AG04450 (cell line): ENCODE measurements at regions of chr14 and their contacts with region 1.

Region 1: DNA sequence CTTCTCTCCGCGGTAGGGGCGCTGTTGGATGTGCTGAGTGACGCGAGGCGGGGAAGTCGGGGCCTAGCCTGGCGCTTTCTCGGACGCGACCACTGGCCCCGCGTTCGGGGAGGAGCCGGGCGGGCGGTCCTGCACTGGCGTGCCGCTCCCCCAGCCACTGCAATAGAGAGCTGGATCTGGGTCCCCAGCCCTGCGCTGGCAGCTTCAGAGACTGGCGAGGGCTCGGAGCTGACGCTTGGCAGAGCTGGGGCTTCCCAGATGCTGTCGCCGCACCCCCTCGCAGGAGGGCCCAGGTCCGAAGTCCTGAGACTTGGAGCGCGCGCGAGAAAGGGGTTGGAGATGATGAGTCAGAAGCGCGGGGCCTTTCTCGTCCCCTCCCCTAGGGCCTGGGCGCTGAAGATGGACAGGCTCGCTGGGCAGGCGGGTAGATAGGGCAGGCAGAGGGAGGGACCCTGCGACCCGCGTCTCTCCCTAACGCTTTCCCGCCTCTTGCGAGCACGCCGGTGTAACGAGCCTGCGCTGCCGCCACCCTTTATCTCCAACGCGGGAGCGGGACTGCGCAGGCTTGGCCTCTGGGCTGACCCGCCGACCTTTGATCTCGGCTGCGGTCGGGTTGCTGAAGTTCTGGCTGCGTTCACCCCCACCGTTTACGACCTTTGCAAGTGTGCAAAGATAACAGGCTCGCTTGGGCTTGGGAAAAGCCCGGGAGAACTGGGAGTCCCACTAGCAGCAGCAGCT is 3.0 kb downstream of the TMEM253 start:
- DNase-seq: peak; percentile 90
- H3K4me3 ChIP-seq: peak overlapping the region; percentile 75
- H3K27ac ChIP-seq: peak overlapping the region; percentile 98
- H3K27me3 ChIP-seq: peaks cover 6% of the 10 kb centered on the region
- CTCF ChIP-seq: peak; percentile 84

Region 2: GRCh38 chr14:20059745-20060144 is 1044.1 kb before region 1 on chr14 and contains the start of gene OR4L1:
- CTCF ChIA-PET with region 1: no interaction called
- POLR2A ChIA-PET with region 1: no interaction called
- DNase-seq: no peak
- H3K4me3 ChIP-seq: no peak within 1 kb of the TSS
- H3K27ac ChIP-seq: no peak within 1 kb of the TSS
- H3K27me3 ChIP-seq: no peaks in the 10 kb centered on the region
- CTCF ChIP-seq: no peak
- polyA plus RNA-seq, gene OR4L1: not detected in 2 replicates

Region 3: DNA sequence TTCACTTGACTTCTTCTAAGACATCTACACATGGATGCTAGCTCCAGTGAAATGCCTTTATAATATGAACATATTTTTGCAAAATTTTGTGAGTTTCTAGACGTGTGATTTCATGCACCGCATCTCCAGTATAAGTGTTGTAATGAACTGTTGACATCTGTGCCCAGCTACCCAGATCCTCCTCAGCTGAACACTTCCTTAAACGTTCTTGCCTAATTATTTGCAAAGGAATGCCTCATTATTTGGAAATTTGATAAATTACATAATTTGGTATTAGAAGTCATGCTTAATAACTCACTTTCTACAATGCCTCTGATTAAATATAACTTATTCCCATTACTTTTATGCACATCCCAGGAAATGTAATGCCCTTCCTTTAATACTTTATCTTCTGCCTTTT is 899.2 kb before region 1 on chr14:
- CTCF ChIA-PET with region 1: no interaction called
- POLR2A ChIA-PET with region 1: no interaction called
- DNase-seq: no peak
- H3K4me3 ChIP-seq: no peak overlapping the region
- H3K27ac ChIP-seq: no peak overlapping the region
- H3K27me3 ChIP-seq: no peaks in the 10 kb centered on the region
- CTCF ChIP-seq: no peak

Region 4: DNA sequence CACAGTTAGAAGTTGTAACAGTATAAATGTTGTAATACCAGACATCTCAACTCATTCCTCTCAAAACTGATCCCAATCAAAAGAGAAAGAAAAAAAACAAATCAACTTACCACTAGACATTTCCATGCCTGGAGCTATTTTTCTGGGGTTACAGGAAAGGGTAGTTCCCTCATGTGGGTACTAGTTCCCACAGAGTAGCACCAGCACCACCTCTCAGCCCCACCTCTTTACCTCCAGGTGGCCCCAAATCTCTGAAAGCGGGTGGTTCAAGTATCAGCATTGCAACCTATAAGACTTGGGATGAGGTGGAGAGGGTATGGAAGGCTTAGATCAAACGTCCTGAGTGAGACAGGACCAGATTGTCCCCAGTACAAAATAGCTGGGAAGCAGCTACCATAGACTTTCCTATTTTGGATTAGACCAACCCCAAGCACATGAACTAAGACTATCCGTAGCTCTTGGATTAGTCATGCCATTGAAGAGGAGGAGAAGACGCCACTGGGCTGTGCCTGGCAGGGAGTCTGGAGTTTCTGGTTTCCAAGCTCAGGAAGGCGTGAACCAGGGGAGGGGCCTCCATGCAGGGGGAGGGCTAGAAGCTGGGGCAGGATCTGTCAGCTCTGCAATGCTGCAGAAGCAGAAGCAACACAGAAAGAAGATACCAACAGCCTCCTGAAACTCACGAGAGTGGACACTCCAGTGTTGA is 105.1 kb before region 1 on chr14 and contains the start of gene SLC39A2:
- CTCF ChIA-PET with region 1: interaction called, 19 read pairs
- POLR2A ChIA-PET with region 1: no interaction called
- DNase-seq: no peak
- H3K4me3 ChIP-seq: no peak within 1 kb of the TSS
- H3K27ac ChIP-seq: no peak within 1 kb of the TSS
- H3K27me3 ChIP-seq: no peaks in the 10 kb centered on the region
- CTCF ChIP-seq: no peak
- polyA plus RNA-seq, gene SLC39A2: 0.06 TPM in 1 of 2 replicates, not detected in the other

Region 5: GRCh38 chr14:21039585-21040369 is 64.1 kb before region 1 on chr14:
- CTCF ChIA-PET with region 1: interaction called, 23 read pairs
- POLR2A ChIA-PET with region 1: no interaction called
- DNase-seq: peak; percentile 26
- H3K4me3 ChIP-seq: no peak overlapping the region
- H3K27ac ChIP-seq: no peak overlapping the region
- H3K27me3 ChIP-seq: peaks cover 28% of the 10 kb centered on the region
- CTCF ChIP-seq: peak; percentile 71

Region 6: DNA sequence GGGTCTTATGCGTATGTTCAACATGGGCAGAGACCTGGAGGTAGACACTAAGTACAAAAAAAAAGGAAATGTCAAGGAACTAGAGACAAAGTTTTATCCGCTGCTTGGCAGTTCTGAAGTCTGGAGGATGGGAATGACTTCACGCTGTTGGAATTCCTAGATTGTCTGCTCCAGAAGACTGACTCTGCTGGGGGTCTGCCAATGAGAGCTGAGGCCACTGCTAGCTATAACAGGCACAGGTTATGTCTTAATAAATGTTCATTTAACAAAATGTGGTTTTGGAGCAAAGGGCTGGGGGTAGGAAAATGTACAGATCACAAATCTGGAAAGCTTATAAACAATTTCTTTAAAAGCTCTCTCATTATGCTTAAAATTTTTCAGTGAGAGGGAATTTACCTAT is 40.4 kb before region 1 on chr14:
- CTCF ChIA-PET with region 1: interaction called, 153 read pairs
- POLR2A ChIA-PET with region 1: interaction called, 3 read pairs
- DNase-seq: peak; percentile 54
- H3K4me3 ChIP-seq: no peak overlapping the region
- H3K27ac ChIP-seq: no peak overlapping the region
- H3K27me3 ChIP-seq: no peaks in the 10 kb centered on the region
- CTCF ChIP-seq: no peak

Region 7: GRCh38 chr14:21092273-21093011 is 11.4 kb before region 1 on chr14:
- CTCF ChIA-PET with region 1: interaction called, 151 read pairs
- POLR2A ChIA-PET with region 1: interaction called, 14 read pairs
- DNase-seq: no peak
- H3K4me3 ChIP-seq: no peak overlapping the region
- H3K27ac ChIP-seq: no peak overlapping the region
- H3K27me3 ChIP-seq: no peaks in the 10 kb centered on the region
- CTCF ChIP-seq: peak; percentile 100